Natural killer cell (primary cell): ENCODE measurements at regions of chr2 and their contacts with region 1.

Region 1: DNA sequence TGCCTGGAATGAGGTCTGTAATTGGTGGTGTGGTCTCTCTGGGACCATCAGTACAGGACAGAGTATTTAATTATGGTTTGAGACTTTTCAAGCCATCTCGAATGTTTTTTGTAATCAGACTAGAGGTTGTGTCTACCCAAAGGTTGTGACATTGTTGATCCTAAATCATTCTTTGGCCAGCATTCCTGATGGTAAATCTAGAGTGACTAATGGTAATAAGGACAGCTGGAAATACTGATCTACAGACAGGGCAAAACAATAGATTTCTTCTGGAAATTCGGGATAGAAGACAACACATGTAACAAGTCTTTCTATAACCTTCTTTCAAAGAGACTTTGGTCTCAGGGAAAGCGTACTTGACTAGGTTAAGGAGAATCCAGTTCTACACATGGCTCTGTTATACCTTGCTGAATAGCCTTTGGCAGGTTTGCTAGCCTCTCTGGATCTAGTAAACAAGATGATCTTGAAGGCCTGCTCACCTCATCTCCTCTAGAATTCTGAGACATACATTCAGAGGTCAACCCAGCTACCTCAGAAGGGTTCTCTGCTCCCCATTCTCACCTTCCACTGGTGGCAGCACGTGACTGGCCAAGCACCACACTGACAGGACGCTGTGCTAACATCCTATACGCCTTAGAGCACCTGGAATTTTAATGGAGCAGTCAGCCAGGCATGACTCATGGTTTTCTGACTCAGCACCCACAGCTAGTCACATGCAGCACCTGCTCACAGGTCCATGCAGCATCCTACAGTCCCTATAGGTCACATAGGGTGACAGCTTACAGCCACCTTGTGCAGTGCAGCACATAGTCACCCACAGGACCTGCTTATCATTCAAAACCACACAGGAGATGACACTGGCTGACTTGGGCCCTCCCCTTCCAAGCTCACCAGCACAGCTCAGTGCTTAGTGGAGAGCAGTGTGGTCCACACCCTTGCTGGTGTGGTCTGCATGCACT is 12.2 kb downstream of the PLB1 start:
- DNase-seq: peak; percentile 59
- ATAC-seq: peak; percentile 93 to 99 (median 96)
- H3K4me3 ChIP-seq: no peak overlapping the region
- H3K4me3 Mint-ChIP-seq: no peak overlapping the region
- H3K27ac ChIP-seq: peak overlapping the region; percentile 31
- H3K27ac Mint-ChIP-seq: peak overlapping the region; percentile 49 to 86
- H3K4me1 ChIP-seq: peaks cover 19% of the 10 kb centered on the region
- H3K4me1 Mint-ChIP-seq: peaks cover 17 to 21% of the 10 kb centered on the region in 2 donors
- H3K27me3 ChIP-seq: no peaks in the 10 kb centered on the region
- H3K27me3 Mint-ChIP-seq: peaks cover 7 to 8% of the 10 kb centered on the region in 2 donors
- CTCF ChIP-seq: no peak

Region 2: GRCh38 chr2:28544919-28545589 is 37.0 kb after region 1 on chr2:
- intact Hi-C with region 1: loop called (anchors 1 kb)
- DNase-seq: peak; percentile 20 to 61
- ATAC-seq: peak; percentile 61 to 80 (median 71)
- H3K4me3 ChIP-seq: no peak overlapping the region
- H3K4me3 Mint-ChIP-seq: peak overlapping the region; percentile 71
- H3K27ac ChIP-seq: peak overlapping the region; percentile 74
- H3K27ac Mint-ChIP-seq: peak overlapping the region; percentile 75 to 85
- H3K4me1 ChIP-seq: peaks cover 76% of the 10 kb centered on the region
- H3K4me1 Mint-ChIP-seq: peaks cover 43 to 54% of the 10 kb centered on the region in 2 donors
- H3K27me3 ChIP-seq: no peaks in the 10 kb centered on the region
- H3K27me3 Mint-ChIP-seq: no peaks in the 10 kb centered on the region
- CTCF ChIP-seq: no peak